ENCODE measurements at regions of chr5 and their contacts with region 1.

Region 1: GRCh38 chr5:142699184-142699720 is 13.4 kb upstream of the FGF1 start:
- DNase-seq: peak; percentile 88
- ATAC-seq: peak; percentile 99
- H3K4me3 ChIP-seq: no peak overlapping the region
- H3K27ac ChIP-seq: no peak overlapping the region
- H3K4me1 ChIP-seq: peaks cover 25% of the 10 kb centered on the region
- H3K27me3 ChIP-seq: no peaks in the 10 kb centered on the region
- CTCF ChIP-seq: peak; percentile 98

Region 2: GRCh38 chr5:142627383-142628255 is 71.6 kb before region 1 on chr5:
- intact Hi-C with region 1: no loop called
- DNase-seq: no peak
- ATAC-seq: no peak
- H3K4me3 ChIP-seq: no peak overlapping the region
- H3K27ac ChIP-seq: no peak overlapping the region
- H3K4me1 ChIP-seq: peaks cover 6% of the 10 kb centered on the region
- H3K27me3 ChIP-seq: no peaks in the 10 kb centered on the region
- CTCF ChIP-seq: no peak

Region 3: GRCh38 chr5:142655339-142656267 is 43.6 kb before region 1 on chr5:
- intact Hi-C with region 1: loop called (anchors 5 kb)
- DNase-seq: peak; percentile 89
- ATAC-seq: peak; percentile 96
- H3K4me3 ChIP-seq: no peak overlapping the region
- H3K27ac ChIP-seq: no peak overlapping the region
- H3K4me1 ChIP-seq: peaks cover 6% of the 10 kb centered on the region
- H3K27me3 ChIP-seq: no peaks in the 10 kb centered on the region
- CTCF ChIP-seq: peak; percentile 99